ENCODE measurements at regions of chr12 and their contacts with region 1.

Region 1: GRCh38 chr12:51341259-51342007 is 5.0 kb downstream of the CELA1 start:
- DNase-seq: peak; percentile 39 to 77 (median 67)
- H3K4me3 ChIP-seq: no peak overlapping the region
- H3K4me3 Mint-ChIP-seq: peak overlapping the region in 6 of 7 donors; percentile 24 to 77 (median 58)
- H3K27ac ChIP-seq: no peak overlapping the region
- H3K27ac Mint-ChIP-seq: peak overlapping the region in 7 of 8 donors; percentile 5 to 92 (median 85)
- H3K4me1 ChIP-seq: peaks cover 9% of the 10 kb centered on the region
- H3K4me1 Mint-ChIP-seq: peaks cover 7 to 11% (median 7%) of the 10 kb centered on the region in 3 donors
- H3K27me3 ChIP-seq: no peaks in the 10 kb centered on the region
- H3K27me3 Mint-ChIP-seq: no peaks in the 10 kb centered on the region

Region 2: GRCh38 chr12:51047655-51048540 is 293.5 kb before region 1 on chr12 and contains the start of gene LETMD1:
- CTCF ChIA-PET with region 1: interaction called, 11 read pairs
- POLR2A ChIA-PET with region 1: no interaction called
- DNase-seq: peak; percentile 84 to 96 (median 94)
- H3K4me3 ChIP-seq: peak within 1 kb of the TSS; percentile 82
- H3K4me3 Mint-ChIP-seq: peak within 1 kb of the TSS; percentile 92 to 100 (median 95)
- H3K27ac ChIP-seq: peak within 1 kb of the TSS; percentile 82
- H3K27ac Mint-ChIP-seq: peak within 1 kb of the TSS; percentile 92 to 99 (median 96)
- H3K4me1 ChIP-seq: peaks cover 29% of the 10 kb centered on the region
- H3K4me1 Mint-ChIP-seq: peaks cover 30 to 43% (median 40%) of the 10 kb centered on the region in 3 donors
- H3K27me3 ChIP-seq: no peaks in the 10 kb centered on the region
- H3K27me3 Mint-ChIP-seq: no peaks in the 10 kb centered on the region
- total RNA-seq, gene LETMD1: 61.8 to 64.3 TPM

Region 3: DNA sequence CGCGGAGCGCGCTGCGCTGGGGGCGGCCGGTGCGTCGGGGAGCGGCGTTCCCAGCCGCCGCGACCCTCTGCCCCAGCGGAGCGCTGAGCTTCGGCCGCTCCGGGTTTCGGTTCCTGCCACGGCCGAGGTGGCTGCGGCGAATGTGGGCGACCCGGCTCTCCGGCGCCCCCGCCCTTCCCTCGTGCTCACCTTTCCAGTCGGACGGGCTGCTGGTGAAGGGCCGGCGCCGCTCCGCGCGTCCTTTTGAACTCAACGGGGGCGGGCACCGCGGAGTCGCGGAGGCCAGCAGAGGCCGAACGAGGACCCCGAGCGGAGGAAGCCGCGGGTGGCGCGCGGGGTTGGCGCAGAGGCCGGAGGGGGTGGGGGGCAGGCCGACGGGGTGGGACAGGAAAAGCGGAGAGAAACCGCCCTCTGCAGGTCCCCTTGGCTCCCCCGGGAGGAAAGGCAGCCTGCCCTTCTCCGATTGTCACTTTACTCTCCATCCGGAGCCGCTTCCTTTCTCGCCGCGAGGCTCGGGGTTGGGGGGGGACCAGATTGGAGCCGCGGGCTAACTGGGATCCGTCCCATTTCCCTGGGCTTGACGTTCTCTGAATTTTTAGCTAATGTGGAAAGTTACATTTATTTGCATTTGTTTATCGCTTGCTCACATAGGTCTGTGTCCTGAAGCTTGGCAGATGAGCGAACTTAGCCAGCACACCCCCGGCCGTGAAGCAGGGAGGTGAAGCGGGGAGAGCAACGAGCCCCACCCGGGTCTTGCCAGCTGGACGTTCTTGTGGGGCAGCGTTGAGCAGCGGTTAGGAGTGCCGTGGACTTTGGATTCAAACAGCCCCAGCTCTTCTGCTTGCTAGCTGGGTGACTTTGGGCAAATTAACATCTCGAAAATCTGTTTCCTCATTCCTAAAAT is 71.1 kb before region 1 on chr12 and contains the start of gene SMAGP:
- CTCF ChIA-PET with region 1: interaction called, 64 read pairs
- POLR2A ChIA-PET with region 1: interaction called, 6 read pairs
- DNase-seq: peak; percentile 46 to 70 (median 49)
- H3K4me3 ChIP-seq: peak within 1 kb of the TSS; percentile 77
- H3K4me3 Mint-ChIP-seq: peak within 1 kb of the TSS; percentile 90 to 97 (median 94)
- H3K27ac ChIP-seq: peak within 1 kb of the TSS; percentile 25
- H3K27ac Mint-ChIP-seq: peak within 1 kb of the TSS; percentile 74 to 97 (median 92)
- H3K4me1 ChIP-seq: peaks cover 20% of the 10 kb centered on the region
- H3K4me1 Mint-ChIP-seq: peaks cover 24 to 37% (median 30%) of the 10 kb centered on the region in 3 donors
- H3K27me3 ChIP-seq: no peaks in the 10 kb centered on the region
- H3K27me3 Mint-ChIP-seq: no peaks in the 10 kb centered on the region
- total RNA-seq, gene SMAGP: 0.72 to 0.84 TPM

Region 4: DNA sequence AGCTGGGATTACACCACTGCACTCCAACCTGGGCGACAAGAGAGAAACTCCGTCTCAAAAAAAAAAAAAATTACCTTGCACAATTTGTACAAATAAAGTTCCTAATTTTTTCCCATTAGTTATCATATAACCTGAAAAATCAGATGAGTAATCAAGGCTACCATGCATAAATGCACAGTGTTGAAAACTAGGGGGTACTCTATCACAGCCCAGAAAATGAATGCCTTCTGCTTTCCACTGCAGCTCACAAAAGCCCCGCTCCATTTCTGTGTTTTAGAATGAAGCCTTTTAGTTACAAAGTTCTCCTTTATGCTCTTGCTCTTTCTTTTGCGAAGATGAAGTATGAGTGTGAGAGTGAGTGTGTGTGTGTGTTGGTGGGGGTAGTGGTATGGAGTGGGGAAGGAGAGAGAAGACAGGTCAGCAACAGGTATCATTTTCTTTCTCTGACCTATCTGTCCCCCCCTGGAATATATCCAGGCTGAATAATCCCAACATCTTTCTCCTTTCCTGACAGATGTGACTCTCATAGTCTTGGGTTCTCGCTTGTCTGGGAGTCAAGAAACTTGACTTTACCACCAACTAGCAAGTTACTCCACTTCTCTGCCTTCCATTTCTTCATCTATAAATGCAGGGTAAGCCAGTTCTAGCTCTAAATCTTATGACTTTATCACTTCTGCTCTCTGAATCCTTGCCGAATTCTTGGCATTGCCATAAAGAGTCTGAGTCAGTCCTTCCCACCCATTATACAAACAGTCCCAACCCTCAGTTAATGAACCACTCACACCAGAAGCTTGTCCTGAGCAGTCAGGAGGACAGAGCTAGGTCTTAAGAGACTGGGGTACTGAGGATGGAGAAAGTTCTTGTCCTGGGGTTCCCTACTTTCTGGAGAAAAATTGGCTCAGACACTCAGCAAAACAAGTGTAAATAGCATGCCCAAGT is 33.5 kb before region 1 on chr12:
- CTCF ChIA-PET with region 1: interaction called, 29 read pairs
- POLR2A ChIA-PET with region 1: interaction called, 5 read pairs
- DNase-seq: peak in 1 of 5 donors; percentile 23
- H3K4me3 ChIP-seq: no peak overlapping the region
- H3K4me3 Mint-ChIP-seq: peak overlapping the region in 3 of 7 donors; percentile 53 to 62 (median 55)
- H3K27ac ChIP-seq: no peak overlapping the region
- H3K27ac Mint-ChIP-seq: peak overlapping the region; percentile 69 to 97 (median 88)
- H3K4me1 ChIP-seq: peaks cover 48% of the 10 kb centered on the region
- H3K4me1 Mint-ChIP-seq: peaks cover 69 to 81% (median 77%) of the 10 kb centered on the region in 3 donors
- H3K27me3 ChIP-seq: no peaks in the 10 kb centered on the region
- H3K27me3 Mint-ChIP-seq: no peaks in the 10 kb centered on the region

Region 5: GRCh38 chr12:51326762-51327439 is 14.5 kb before region 1 on chr12:
- CTCF ChIA-PET with region 1: interaction called, 67 read pairs
- POLR2A ChIA-PET with region 1: interaction called, 9 read pairs
- DNase-seq: no peak
- H3K4me3 ChIP-seq: no peak overlapping the region
- H3K4me3 Mint-ChIP-seq: peak overlapping the region; percentile 38 to 75 (median 58)
- H3K27ac ChIP-seq: peak overlapping the region; percentile 70
- H3K27ac Mint-ChIP-seq: peak overlapping the region; percentile 81 to 97 (median 88)
- H3K4me1 ChIP-seq: peaks cover 55% of the 10 kb centered on the region
- H3K4me1 Mint-ChIP-seq: peaks cover 67 to 82% (median 80%) of the 10 kb centered on the region in 3 donors
- H3K27me3 ChIP-seq: no peaks in the 10 kb centered on the region
- H3K27me3 Mint-ChIP-seq: no peaks in the 10 kb centered on the region

Measured in CD8-positive, alpha-beta memory T cell (primary cell).